IMR-90 (cell line): ENCODE measurements at regions of chr1 and their contacts with region 1.

Region 1: DNA sequence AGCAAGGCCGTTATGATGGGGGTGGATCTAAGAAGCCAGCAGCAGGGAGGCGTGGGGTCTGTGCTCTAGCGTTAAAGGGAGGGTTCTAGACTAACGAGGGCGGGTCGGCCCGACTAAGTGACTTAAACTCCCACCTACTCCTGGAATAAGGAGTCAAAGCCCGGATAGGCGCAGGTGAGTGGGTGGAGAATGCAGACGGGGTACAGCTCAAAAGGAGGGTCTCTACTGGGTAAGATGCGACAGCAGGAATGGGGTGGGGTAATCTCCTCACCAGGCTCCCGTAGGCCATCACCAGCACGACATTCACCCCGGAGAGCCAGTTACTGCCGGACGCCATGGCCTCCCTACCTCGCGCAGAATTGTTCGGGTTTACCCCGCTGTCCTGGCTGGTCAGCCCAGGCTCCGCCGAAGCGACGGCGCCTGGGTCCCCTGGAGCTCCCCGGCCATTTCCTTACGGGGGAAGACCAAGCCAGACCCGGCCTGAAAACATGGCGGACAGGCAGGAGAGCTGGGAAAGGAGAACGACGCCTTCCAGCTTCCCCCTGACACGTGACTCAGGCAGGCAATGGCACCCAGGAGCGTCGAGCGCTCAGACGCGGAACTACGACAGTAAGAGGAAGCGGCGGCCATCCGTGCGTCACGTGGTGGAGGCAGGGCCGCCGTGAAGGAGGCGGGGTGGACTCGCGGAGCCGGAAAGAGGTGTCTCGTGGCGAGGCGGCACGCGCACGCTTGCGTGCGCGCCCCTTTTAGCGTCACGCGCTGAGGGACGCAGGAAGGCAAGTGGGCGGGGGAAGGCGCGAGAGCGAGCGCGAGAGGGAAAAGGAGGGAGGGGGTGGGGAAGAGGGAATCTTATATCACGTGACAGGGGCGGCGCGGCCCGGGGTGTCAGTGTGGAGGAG is at the start of gene UBAP2L:
- DNase-seq: peak; percentile 99
- ATAC-seq: peak; percentile 91
- H3K4me3 ChIP-seq: peak within 1 kb of the TSS; percentile 94
- H3K27ac ChIP-seq: peak within 1 kb of the TSS; percentile 98
- H3K4me1 ChIP-seq: no peaks in the 10 kb centered on the region; the same call in 1 of the 2 replicates
- H3K27me3 ChIP-seq: no peaks in the 10 kb centered on the region
- CTCF ChIP-seq: no peak
- POLR2A ChIP-seq: peak; percentile 91
- RAD21 ChIP-seq: no peak
- total RNA-seq, gene UBAP2L: 57.5 and 77.2 TPM in 2 replicates

Region 2: GRCh38 chr1:154097873-154098272 is 122.4 kb before region 1 on chr1:
- CTCF ChIA-PET with region 1: no interaction called
- POLR2A ChIA-PET with region 1: no interaction called
- dilution Hi-C with region 1: no loop called
- in situ Hi-C with region 1: no loop called
- intact Hi-C with region 1: no loop called
- DNase-seq: no peak
- ATAC-seq: no peak
- H3K4me3 ChIP-seq: no peak overlapping the region
- H3K27ac ChIP-seq: no peak overlapping the region
- H3K4me1 ChIP-seq: no peaks in the 10 kb centered on the region
- H3K27me3 ChIP-seq: no peaks in the 10 kb centered on the region; the same call in 1 of the 2 replicates
- CTCF ChIP-seq: no peak
- POLR2A ChIP-seq: no peak
- RAD21 ChIP-seq: no peak

Region 3: GRCh38 chr1:154256686-154257085 is 36.4 kb after region 1 on chr1:
- CTCF ChIA-PET with region 1: no interaction called
- POLR2A ChIA-PET with region 1: no interaction called
- dilution Hi-C with region 1: no loop called
- in situ Hi-C with region 1: no loop called
- intact Hi-C with region 1: loop called (anchors 5 kb)
- DNase-seq: no peak
- ATAC-seq: peak; percentile 44; the same call in 1 of the 2 replicates
- H3K4me3 ChIP-seq: no peak overlapping the region
- H3K27ac ChIP-seq: no peak overlapping the region
- H3K4me1 ChIP-seq: no peaks in the 10 kb centered on the region
- H3K27me3 ChIP-seq: no peaks in the 10 kb centered on the region
- CTCF ChIP-seq: no peak
- POLR2A ChIP-seq: no peak
- RAD21 ChIP-seq: no peak

Region 4: GRCh38 chr1:154479764-154480421 is 259.6 kb after region 1 on chr1:
- CTCF ChIA-PET with region 1: no interaction called
- POLR2A ChIA-PET with region 1: no interaction called
- dilution Hi-C with region 1: no loop called
- in situ Hi-C with region 1: no loop called
- intact Hi-C with region 1: no loop called
- DNase-seq: peak; percentile 85
- ATAC-seq: peak; percentile 93
- H3K4me3 ChIP-seq: no peak overlapping the region
- H3K27ac ChIP-seq: no peak overlapping the region
- H3K4me1 ChIP-seq: peaks cover 3% of the 10 kb centered on the region
- H3K27me3 ChIP-seq: peaks cover 5% of the 10 kb centered on the region; the same call in 1 of the 2 replicates
- CTCF ChIP-seq: peak; percentile 98
- POLR2A ChIP-seq: peak; percentile 40; the same call in 1 of the 2 replicates
- RAD21 ChIP-seq: peak; percentile 93